Vagina (tissue), 2 donors: ENCODE measurements at regions of chr4 and their contacts with region 1.

Region 1: GRCh38 chr4:12827966-12828365 is 656.2 kb downstream of the RAB28 start:
- DNase-seq: no peak
- H3K4me3 ChIP-seq: no peak overlapping the region
- H3K27ac ChIP-seq: no peak overlapping the region
- H3K4me1 ChIP-seq: no peaks in the 10 kb centered on the region
- H3K27me3 ChIP-seq: no peaks in the 10 kb centered on the region
- CTCF ChIP-seq: no peak
- POLR2A ChIP-seq: no peak

Region 2: GRCh38 chr4:12897954-12898353 is 70.0 kb after region 1 on chr4:
- intact Hi-C with region 1: loop called (anchors 2 kb)
- DNase-seq: no peak
- H3K4me3 ChIP-seq: no peak overlapping the region
- H3K27ac ChIP-seq: no peak overlapping the region
- H3K4me1 ChIP-seq: no peaks in the 10 kb centered on the region
- H3K27me3 ChIP-seq: no peaks in the 10 kb centered on the region
- CTCF ChIP-seq: no peak
- POLR2A ChIP-seq: no peak